ENCODE measurements at regions of chr6 and their contacts with region 1.

Region 1: GRCh38 chr6:56902641-56903464 is 52.1 kb upstream of the BEND6 start:
- DNase-seq: peak; percentile 46
- H3K4me3 Mint-ChIP-seq: no peak overlapping the region
- H3K27ac Mint-ChIP-seq: no peak overlapping the region
- H3K4me1 Mint-ChIP-seq: peaks cover 16% of the 10 kb centered on the region
- H3K27me3 Mint-ChIP-seq: no peaks in the 10 kb centered on the region
- CTCF ChIP-seq: peak; percentile 58

Region 2: DNA sequence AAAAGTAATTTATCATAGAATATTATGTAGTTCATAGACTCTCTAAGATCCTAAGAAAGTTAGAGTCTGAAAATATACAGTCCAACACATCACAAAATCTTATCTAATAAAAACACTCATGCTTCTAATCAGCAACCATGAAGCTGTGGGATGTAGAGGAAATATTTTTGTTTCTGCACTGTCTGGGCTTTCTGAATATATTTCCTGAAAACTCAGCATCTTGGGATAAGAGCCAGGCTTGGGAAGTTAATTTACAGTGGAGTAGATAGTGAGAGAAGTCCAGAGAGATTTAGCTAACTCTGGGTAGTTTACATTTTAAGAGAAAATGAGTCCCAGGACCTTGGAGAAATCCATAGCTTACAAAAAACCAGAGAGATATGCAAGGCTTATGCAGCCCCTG is 877.1 kb before region 1 on chr6:
- CTCF ChIA-PET with region 1: no interaction called
- POLR2A ChIA-PET with region 1: no interaction called
- intact Hi-C with region 1: no loop called
- DNase-seq: no peak
- H3K4me3 Mint-ChIP-seq: no peak overlapping the region
- H3K27ac Mint-ChIP-seq: no peak overlapping the region
- H3K4me1 Mint-ChIP-seq: peaks cover 5% of the 10 kb centered on the region
- H3K27me3 Mint-ChIP-seq: no peaks in the 10 kb centered on the region
- CTCF ChIP-seq: no peak

Region 3: DNA sequence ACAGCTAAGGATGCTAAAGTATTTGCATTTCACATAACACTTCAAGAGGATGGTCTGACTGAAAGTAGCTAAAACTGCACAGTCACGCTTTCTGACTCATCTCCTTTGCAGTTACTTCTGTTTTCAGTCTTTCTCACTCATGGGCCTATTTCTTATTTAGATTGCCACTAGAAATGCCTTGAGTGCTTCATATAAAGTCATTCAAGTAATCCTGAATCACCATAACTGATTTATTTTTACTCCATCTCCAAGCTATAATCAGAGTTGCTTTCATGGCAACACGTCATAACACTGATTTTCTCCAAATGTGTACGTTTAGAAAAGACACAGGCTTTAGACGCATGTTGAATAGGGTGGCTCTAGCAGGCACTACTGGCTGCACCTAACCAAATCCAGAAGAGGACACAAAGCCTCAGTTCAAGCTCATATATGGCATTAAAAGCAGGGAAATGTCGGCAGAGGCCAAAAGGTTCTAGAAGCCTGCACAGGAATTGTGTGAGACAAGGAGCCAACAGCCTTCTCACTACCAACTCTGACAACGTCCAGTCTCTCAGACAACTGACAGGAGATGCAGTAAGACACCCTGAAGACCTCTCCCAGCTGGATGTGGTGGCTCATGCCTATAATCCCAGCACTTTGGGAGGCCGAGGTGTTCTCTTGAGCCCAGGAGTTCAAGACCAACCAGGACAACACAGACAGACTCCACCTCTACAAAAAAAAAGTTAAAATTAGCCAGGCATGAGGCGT is 12.0 kb before region 1 on chr6:
- CTCF ChIA-PET with region 1: interaction called, 41 read pairs
- POLR2A ChIA-PET with region 1: interaction called, 3 read pairs
- intact Hi-C with region 1: no loop called
- DNase-seq: peak; percentile 66
- H3K4me3 Mint-ChIP-seq: no peak overlapping the region
- H3K27ac Mint-ChIP-seq: peak overlapping the region; percentile 57
- H3K4me1 Mint-ChIP-seq: peaks cover 6% of the 10 kb centered on the region
- H3K27me3 Mint-ChIP-seq: no peaks in the 10 kb centered on the region
- CTCF ChIP-seq: no peak

Region 4: DNA sequence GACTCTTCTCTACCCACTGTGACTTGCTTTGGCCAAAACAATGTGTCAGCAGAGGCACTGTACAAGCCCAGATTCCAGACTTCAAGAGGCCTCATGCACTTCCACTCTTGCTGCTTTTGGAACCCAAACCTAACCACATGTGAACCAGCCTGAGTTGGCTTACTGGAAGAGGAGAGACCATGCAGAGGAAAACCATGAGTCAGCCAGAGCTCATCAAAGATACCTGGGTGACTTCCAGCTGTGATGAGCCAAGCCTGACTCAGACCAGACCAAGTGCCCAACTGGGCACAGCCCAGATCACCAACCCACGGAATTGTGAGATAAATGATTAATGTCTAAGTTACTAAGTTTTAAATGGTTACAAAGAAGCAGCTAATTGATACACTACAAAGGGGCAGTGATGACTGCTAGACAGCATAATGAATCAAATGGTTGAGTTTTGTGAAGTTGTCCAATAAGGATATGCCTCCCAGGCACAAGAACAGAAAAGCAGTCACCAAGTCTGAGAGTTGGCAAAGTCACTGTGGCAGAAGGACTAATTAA is 35.9 kb after region 1 on chr6:
- CTCF ChIA-PET with region 1: interaction called, 35 read pairs
- POLR2A ChIA-PET with region 1: interaction called, 3 read pairs
- intact Hi-C with region 1: loop called (anchors 1 kb)
- DNase-seq: peak; percentile 100
- H3K4me3 Mint-ChIP-seq: peak overlapping the region; percentile 8
- H3K27ac Mint-ChIP-seq: peak overlapping the region; percentile 17
- H3K4me1 Mint-ChIP-seq: peaks cover 15% of the 10 kb centered on the region
- H3K27me3 Mint-ChIP-seq: no peaks in the 10 kb centered on the region
- CTCF ChIP-seq: no peak

Region 5: DNA sequence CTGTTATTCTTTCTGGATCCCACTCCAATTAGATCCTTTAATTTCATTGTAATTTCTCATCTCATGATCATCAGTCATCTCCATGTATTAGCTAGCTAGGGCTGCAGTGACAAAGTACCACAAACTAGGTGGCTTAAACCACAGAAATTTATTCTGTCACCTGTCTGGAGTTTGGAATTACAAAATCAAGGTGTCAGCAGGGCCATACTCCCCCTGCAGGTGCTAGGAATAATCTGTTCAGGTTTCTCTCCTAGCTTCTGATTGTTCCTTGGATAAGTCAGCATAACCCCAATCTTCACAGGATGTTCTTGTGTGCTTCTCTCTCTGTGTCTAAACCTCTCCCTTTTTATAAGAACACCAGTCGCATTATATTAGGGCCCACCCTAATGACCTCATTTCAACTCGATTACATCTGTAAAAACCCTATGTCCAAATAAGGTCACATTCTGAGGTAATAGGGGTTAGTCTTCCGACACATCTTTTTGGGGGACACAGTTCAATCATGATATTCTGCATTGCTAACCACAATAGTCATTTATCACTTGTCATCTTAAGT is 92.6 kb after region 1 on chr6:
- CTCF ChIA-PET with region 1: interaction called, 10 read pairs
- POLR2A ChIA-PET with region 1: no interaction called
- intact Hi-C with region 1: no loop called
- DNase-seq: peak; percentile 29
- H3K4me3 Mint-ChIP-seq: no peak overlapping the region
- H3K27ac Mint-ChIP-seq: peak overlapping the region; percentile 2
- H3K4me1 Mint-ChIP-seq: no peaks in the 10 kb centered on the region
- H3K27me3 Mint-ChIP-seq: no peaks in the 10 kb centered on the region
- CTCF ChIP-seq: no peak

Region 6: GRCh38 chr6:57040009-57040408 is 137.2 kb after region 1 on chr6:
- CTCF ChIA-PET with region 1: interaction called, 10 read pairs
- POLR2A ChIA-PET with region 1: interaction called, 3 read pairs
- intact Hi-C with region 1: no loop called
- DNase-seq: peak; percentile 20
- H3K4me3 Mint-ChIP-seq: no peak overlapping the region
- H3K27ac Mint-ChIP-seq: no peak overlapping the region
- H3K4me1 Mint-ChIP-seq: peaks cover 5% of the 10 kb centered on the region
- H3K27me3 Mint-ChIP-seq: peaks cover 23% of the 10 kb centered on the region
- CTCF ChIP-seq: no peak

Region 7: GRCh38 chr6:57172136-57173055 is 269.5 kb after region 1 on chr6 and contains the start of gene BAG2:
- CTCF ChIA-PET with region 1: no interaction called
- POLR2A ChIA-PET with region 1: no interaction called
- intact Hi-C with region 1: loop called (anchors 10 kb)
- DNase-seq: peak; percentile 85
- H3K4me3 Mint-ChIP-seq: peak within 1 kb of the TSS; percentile 91
- H3K27ac Mint-ChIP-seq: peak within 1 kb of the TSS; percentile 28
- H3K4me1 Mint-ChIP-seq: peaks cover 13% of the 10 kb centered on the region
- H3K27me3 Mint-ChIP-seq: no peaks in the 10 kb centered on the region
- CTCF ChIP-seq: no peak
- total RNA-seq, gene BAG2: 3.6 and 4.2 TPM in 2 replicates

Region 8: GRCh38 chr6:57324538-57324937 is 421.7 kb after region 1 on chr6:
- CTCF ChIA-PET with region 1: interaction called, 74 read pairs
- POLR2A ChIA-PET with region 1: interaction called, 3 read pairs
- intact Hi-C with region 1: no loop called
- DNase-seq: no peak
- H3K4me3 Mint-ChIP-seq: no peak overlapping the region
- H3K27ac Mint-ChIP-seq: no peak overlapping the region
- H3K4me1 Mint-ChIP-seq: peaks cover 13% of the 10 kb centered on the region
- H3K27me3 Mint-ChIP-seq: no peaks in the 10 kb centered on the region
- CTCF ChIP-seq: peak; percentile 33